Activated CD4-positive, alpha-beta memory T cell treated with anti-CD3 and anti-CD28 coated beads, Interleukin-2, amount 10 ng/mL, durations not matched to agents 7 days and 5 days (primary cell): ENCODE measurements at regions of chr9 and their contacts with region 1.

Region 1: GRCh38 chr9:21110708-21111576 is 30.7 kb downstream of the IFNW1 start:
- DNase-seq: no peak
- H3K4me3 Mint-ChIP-seq: no peak overlapping the region
- H3K27ac Mint-ChIP-seq: no peak overlapping the region
- H3K4me1 Mint-ChIP-seq: no peaks in the 10 kb centered on the region
- H3K27me3 Mint-ChIP-seq: peaks cover 12% of the 10 kb centered on the region

Region 2: DNA sequence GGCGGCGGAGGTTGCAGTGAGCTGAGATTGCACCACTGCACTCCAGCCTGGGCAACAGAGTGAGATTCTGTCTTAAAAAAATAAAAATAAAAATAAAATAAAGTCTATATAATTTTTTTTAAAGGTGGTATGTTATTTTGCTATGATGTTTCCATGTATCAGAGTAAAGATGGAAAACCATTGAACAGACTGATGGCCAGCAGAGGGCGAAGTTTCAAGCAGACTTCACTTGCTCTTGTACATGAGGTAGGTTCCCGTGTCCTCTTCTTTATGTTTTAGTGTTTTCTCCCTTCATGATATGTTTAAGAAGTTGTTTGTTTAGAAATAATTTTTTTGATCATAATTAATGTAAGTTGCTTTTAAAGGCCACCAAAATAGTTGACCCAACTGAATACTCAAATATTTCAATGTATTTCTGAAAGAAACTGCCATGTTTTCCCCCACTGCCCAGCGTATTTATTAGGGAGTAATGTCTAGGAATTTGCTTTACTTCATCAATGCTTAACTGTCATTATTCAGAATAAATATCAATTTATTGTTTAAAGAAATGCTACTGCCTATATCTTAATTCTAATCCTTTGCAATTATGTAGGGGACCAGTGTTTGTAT is 225.9 kb before region 1 on chr9:
- CTCF ChIA-PET with region 1: interaction called, 45 read pairs
- POLR2A ChIA-PET with region 1: no interaction called
- DNase-seq: peak; percentile 63
- H3K4me3 Mint-ChIP-seq: no peak overlapping the region
- H3K27ac Mint-ChIP-seq: no peak overlapping the region
- H3K4me1 Mint-ChIP-seq: no peaks in the 10 kb centered on the region
- H3K27me3 Mint-ChIP-seq: no peaks in the 10 kb centered on the region

Region 3: DNA sequence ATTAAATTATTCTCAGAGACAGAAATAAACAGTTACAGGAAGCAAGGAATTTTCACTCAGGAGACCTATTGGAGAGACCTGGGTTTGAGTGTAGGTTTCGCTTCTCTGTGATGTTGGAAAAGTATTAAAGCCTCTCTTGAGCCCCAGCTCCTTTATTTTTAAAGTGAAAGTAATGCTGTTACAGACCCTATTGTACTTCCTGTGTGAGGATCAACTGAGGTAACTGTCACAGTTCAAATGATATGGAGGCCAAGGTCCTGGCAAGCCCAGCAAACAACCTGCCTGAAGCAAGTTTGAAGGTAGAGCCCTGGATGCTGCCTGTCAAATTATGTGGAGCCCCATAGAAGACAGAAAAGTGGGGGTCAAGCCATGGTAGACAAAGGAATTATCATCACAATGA is 71.6 kb before region 1 on chr9:
- CTCF ChIA-PET with region 1: no interaction called
- POLR2A ChIA-PET with region 1: no interaction called
- DNase-seq: no peak
- H3K4me3 Mint-ChIP-seq: no peak overlapping the region
- H3K27ac Mint-ChIP-seq: no peak overlapping the region
- H3K4me1 Mint-ChIP-seq: peaks cover 5% of the 10 kb centered on the region
- H3K27me3 Mint-ChIP-seq: no peaks in the 10 kb centered on the region

Region 4: DNA sequence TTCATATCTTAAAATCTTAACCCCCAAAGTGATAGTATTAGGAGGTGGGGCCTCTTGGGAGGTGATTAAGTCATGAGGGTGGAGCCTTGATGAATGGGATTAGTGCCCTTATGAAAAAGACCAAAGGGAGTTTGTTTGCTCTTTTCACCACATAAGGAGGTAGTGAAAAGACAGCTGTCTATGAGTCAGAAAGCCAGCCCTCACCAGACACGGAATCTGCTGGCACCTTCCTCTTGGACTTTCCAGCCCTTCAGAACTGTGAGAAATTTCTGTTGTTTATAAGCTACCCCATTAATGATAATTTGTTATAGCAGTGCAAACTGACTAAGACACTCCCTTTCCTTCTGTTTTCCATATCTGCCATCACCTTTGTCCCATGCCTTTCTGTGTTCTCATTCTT is 54.0 kb before region 1 on chr9:
- CTCF ChIA-PET with region 1: no interaction called
- POLR2A ChIA-PET with region 1: no interaction called
- DNase-seq: no peak
- H3K4me3 Mint-ChIP-seq: no peak overlapping the region
- H3K27ac Mint-ChIP-seq: no peak overlapping the region
- H3K4me1 Mint-ChIP-seq: peaks cover 18% of the 10 kb centered on the region
- H3K27me3 Mint-ChIP-seq: no peaks in the 10 kb centered on the region

Region 5: GRCh38 chr9:21078717-21079116 is 32.2 kb before region 1 on chr9:
- CTCF ChIA-PET with region 1: interaction called, 23 read pairs
- POLR2A ChIA-PET with region 1: interaction called, 4 read pairs
- DNase-seq: no peak
- H3K4me3 Mint-ChIP-seq: no peak overlapping the region
- H3K27ac Mint-ChIP-seq: no peak overlapping the region
- H3K4me1 Mint-ChIP-seq: peaks cover 26% of the 10 kb centered on the region
- H3K27me3 Mint-ChIP-seq: peaks cover 5% of the 10 kb centered on the region

Region 6: DNA sequence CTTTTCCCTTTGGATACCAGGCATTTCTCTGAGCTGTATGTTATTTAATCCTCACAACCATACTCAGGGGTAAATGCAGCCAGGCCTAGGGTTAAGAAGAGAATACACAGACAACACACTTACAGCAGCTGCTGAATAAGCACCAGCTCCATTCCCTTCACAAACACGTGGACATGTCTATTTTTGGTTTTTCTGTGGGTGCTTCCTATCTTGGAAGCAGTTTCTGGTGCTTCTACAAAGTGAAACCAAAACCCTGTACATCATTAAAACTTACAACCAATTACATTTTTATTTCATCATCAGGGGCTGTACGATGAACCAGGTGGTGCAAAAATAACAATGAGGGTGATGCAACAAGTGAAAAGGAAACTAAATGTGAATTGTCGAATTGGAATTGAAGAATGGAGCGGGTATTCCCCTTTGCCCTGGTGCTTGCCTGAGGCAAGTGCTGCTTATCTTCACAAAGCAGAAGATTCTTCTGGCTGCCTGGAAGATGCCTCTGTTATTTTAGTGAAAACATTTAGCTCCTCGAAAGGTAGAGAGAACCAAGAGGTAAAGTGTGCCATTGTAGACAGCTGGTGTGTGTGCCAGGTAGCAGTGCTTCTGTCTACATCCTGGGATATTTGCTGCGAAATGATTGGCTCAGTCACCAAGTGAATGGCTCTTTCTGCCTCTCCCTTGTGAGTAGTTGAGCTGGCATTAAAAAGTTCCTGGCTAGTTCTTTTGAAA is 14.6 kb before region 1 on chr9:
- CTCF ChIA-PET with region 1: interaction called, 20 read pairs
- POLR2A ChIA-PET with region 1: no interaction called
- DNase-seq: peak; percentile 39
- H3K4me3 Mint-ChIP-seq: peak overlapping the region; percentile 68
- H3K27ac Mint-ChIP-seq: peak overlapping the region; percentile 74
- H3K4me1 Mint-ChIP-seq: peaks cover 31% of the 10 kb centered on the region
- H3K27me3 Mint-ChIP-seq: no peaks in the 10 kb centered on the region